Head of caudate nucleus (tissue), 42 donors: ENCODE measurements at regions of chr2 and their contacts with region 1.

Region 1: GRCh38 chr2:24490674-24491625 is at the start of gene NCOA1:
- DNase-seq: peak; percentile 72 to 97 (median 91)

Region 2: DNA sequence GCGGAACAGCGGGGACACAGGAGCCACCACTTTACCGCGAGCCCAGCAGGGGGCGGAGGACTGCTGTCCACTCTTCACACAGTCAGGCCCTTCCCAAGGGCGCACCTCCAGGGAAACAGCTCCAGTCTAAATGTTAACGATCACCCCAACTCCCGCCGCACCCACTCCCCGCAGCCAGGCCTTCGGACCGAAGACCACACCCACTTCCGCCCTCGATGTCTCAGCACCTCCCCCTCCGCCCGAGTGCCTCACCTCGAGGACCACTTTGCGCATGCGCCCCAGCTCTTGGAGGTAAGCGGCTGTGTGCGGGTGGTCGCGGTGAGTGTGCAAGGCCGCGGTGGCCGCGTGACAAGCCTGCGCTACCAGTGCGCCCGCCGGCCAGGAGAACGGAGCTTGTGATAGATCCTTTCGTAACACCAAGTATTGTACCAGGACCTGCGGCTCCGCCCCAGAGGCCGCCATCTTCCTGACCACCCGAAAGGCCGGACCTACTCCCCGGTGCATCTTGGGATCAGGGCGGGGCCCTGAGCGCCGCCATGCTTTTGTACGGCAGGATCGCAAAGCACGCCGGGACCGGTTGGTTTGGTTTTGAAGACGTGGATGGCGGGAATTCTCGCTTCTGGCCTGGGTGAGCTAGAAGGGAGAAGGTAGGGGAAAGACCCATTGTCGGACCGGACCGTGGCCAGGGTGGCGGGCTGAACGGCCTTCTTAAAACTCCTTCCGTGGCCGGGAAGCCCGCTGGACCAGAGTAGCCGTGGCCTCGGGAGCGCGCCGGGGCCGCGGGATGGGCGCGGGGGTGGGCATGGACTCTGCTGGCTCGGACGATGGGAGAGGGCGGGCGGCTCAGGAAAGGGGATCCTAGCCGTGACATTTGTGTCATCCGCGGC is 302.2 kb after region 1 on chr2 and contains the starts of genes CENPO and PTRHD1:
- intact Hi-C with region 1: loop called (anchors 2 kb)
- DNase-seq: peak; percentile 94 to 99 (median 97)

Region 3: GRCh38 chr2:24871852-24872323 is 380.9 kb after region 1 on chr2:
- intact Hi-C with region 1: no loop called
- DNase-seq: no peak